Activated CD4-positive, alpha-beta T cell treated with anti-CD3 and anti-CD28 coated beads for 36 hours (primary cell): ENCODE measurements at regions of chr1 and their contacts with region 1.

Region 1: GRCh38 chr1:93042187-93043056 is 36.7 kb upstream of the MTF2 start:
- DNase-seq: peak; percentile 20
- ATAC-seq: peak; percentile 98
- H3K4me3 Mint-ChIP-seq: peak overlapping the region; percentile 56
- H3K27ac Mint-ChIP-seq: peak overlapping the region; percentile 92
- H3K4me1 Mint-ChIP-seq: peaks cover 30% of the 10 kb centered on the region
- H3K27me3 Mint-ChIP-seq: no peaks in the 10 kb centered on the region

Region 2: DNA sequence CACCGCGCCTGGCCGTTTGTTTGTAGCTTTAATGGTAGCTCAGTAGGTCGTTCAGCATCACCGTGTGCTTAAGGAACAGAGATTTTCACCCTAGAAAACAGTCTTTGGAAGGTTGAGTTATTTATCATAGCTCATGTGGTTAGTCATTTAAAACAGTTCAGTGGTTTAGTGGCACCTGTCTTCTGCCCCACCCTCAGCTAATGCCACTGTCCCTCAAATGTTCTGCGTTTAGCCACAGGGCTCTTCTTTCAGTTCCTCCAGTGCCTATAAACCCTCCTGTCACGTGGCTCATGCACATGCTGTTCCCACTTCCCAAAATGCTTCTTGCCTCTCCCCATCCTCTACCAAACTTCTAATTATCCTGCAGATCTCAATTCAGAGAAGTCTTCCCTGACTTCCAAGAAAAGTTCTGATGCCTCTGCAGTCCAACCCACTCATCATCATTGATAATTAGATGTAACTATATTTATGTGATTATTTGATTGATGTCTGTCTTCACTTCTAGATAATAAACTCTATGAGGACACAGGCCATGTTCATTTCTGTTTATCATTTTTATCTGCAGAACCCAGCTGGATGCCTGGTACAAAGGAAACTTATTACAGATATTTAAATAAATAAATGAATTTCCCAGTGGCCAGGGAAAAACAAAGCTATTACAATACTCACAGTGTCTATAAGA is 66.7 kb before region 1 on chr1:
- CTCF ChIA-PET with region 1: no interaction called
- POLR2A ChIA-PET with region 1: no interaction called
- intact Hi-C with region 1: loop called in 1 of 2 experiments (anchors 2 kb)
- DNase-seq: peak; percentile 24
- ATAC-seq: peak; percentile 32
- H3K4me3 Mint-ChIP-seq: no peak overlapping the region
- H3K27ac Mint-ChIP-seq: peak overlapping the region; percentile 35
- H3K4me1 Mint-ChIP-seq: peaks cover 69% of the 10 kb centered on the region
- H3K27me3 Mint-ChIP-seq: no peaks in the 10 kb centered on the region